ENCODE measurements at regions of chr21 and their contacts with region 1.

Region 1: GRCh38 chr21:36028127-36029069 is 31.9 kb downstream of the SETD4 start:
- DNase-seq: peak; percentile 83 to 88 (median 86)
- ATAC-seq: peak; percentile 95
- H3K4me3 ChIP-seq: no peak overlapping the region
- H3K27ac ChIP-seq: no peak overlapping the region
- H3K4me1 ChIP-seq: peaks cover 9 to 12% of the 10 kb centered on the region in 2 experiments; a peak in 3 of 5 replicates
- H3K27me3 ChIP-seq: peaks cover 14 to 21% of the 10 kb centered on the region in 2 experiments; a peak in 4 of 5 replicates
- CTCF ChIP-seq: peak; percentile 93 to 99 (median 98)
- EP300 ChIP-seq: no peak
- POLR2A ChIP-seq: no peak
- RAD21 ChIP-seq: peak; percentile 95 to 96

Region 2: GRCh38 chr21:34693192-34693810 is 1335.1 kb before region 1 on chr21:
- CTCF ChIA-PET with region 1: interaction called, 6 read pairs
- POLR2A ChIA-PET with region 1: interaction called, 3 read pairs
- in situ Hi-C with region 1: no loop called
- intact Hi-C with region 1: loop called (anchors 2 kb)
- DNase-seq: peak; percentile 74 to 77 (median 75)
- ATAC-seq: peak; percentile 87
- H3K4me3 ChIP-seq: no peak overlapping the region
- H3K27ac ChIP-seq: no peak overlapping the region
- H3K4me1 ChIP-seq: no peaks in the 10 kb centered on the region; a peak in 1 of 5 replicates
- H3K27me3 ChIP-seq: peaks cover 19 to 21% of the 10 kb centered on the region in 2 experiments
- CTCF ChIP-seq: peak; percentile 77 to 93 (median 88)
- EP300 ChIP-seq: no peak
- POLR2A ChIP-seq: no peak
- RAD21 ChIP-seq: peak; percentile 88 to 94

Region 3: GRCh38 chr21:35635261-35635660 is 393.1 kb before region 1 on chr21:
- CTCF ChIA-PET with region 1: no interaction called
- POLR2A ChIA-PET with region 1: no interaction called
- in situ Hi-C with region 1: no loop called
- intact Hi-C with region 1: no loop called
- DNase-seq: no peak
- ATAC-seq: no peak
- H3K4me3 ChIP-seq: no peak overlapping the region
- H3K27ac ChIP-seq: no peak overlapping the region
- H3K4me1 ChIP-seq: no peaks in the 10 kb centered on the region
- H3K27me3 ChIP-seq: peaks cover 17 to 21% of the 10 kb centered on the region in 2 experiments; a peak in 4 of 5 replicates
- CTCF ChIP-seq: no peak
- EP300 ChIP-seq: no peak
- POLR2A ChIP-seq: no peak
- RAD21 ChIP-seq: no peak

Region 4: GRCh38 chr21:35840197-35840799 is 188.1 kb before region 1 on chr21:
- CTCF ChIA-PET with region 1: no interaction called
- POLR2A ChIA-PET with region 1: no interaction called
- in situ Hi-C with region 1: no loop called
- intact Hi-C with region 1: loop called (anchors 10 kb)
- DNase-seq: peak; percentile 43 to 78 (median 54)
- ATAC-seq: peak; percentile 82
- H3K4me3 ChIP-seq: no peak overlapping the region
- H3K27ac ChIP-seq: no peak overlapping the region
- H3K4me1 ChIP-seq: no peaks in the 10 kb centered on the region
- H3K27me3 ChIP-seq: peaks cover 0 to 11% of the 10 kb centered on the region in 2 experiments; a peak in 3 of 5 replicates
- CTCF ChIP-seq: peak; percentile 70 to 87 (median 75); a peak in 5 of 6 replicates
- EP300 ChIP-seq: no peak
- POLR2A ChIP-seq: no peak
- RAD21 ChIP-seq: peak; percentile 82 to 96

Region 5: DNA sequence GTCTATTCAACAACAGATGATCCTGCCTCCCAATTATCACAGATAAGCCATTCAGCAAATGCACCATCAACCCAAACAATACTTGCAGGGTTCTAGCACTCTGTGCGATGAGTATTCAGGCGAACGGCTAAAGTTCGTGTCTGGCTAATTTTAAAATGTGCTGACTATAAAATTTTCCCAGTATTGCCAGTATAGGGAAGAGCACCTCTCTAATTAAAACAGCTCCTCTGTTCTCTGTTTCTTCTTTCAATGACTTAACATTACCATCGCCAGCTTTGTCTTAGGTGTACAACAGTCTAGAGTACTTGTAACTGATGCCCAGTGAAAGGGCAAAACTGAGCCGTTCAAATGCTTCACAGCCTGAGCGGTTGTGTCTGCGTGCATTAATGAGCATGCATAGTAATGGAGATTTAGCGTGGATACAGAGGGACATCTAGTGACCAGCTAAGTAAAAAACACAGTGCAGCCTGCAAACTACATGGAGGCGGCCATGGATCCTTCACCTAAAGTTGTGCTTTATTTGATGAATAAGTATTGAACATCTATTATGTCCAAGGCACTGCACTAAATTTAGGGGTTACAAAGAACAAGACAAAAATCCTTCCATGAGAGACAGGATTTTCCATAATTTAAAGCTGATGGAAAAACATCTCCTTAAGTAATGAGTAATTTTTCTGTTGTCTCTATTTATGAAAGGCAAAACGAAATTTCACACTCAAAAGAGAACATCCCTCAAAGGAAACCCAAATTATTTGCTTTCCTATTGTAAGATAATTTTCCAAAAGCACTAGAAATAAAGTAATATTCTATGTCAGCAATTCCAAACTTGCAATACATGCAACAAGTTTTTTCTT is 88.1 kb before region 1 on chr21:
- CTCF ChIA-PET with region 1: no interaction called
- POLR2A ChIA-PET with region 1: no interaction called
- in situ Hi-C with region 1: no loop called
- intact Hi-C with region 1: loop called (anchors 5 kb)
- DNase-seq: peak in 3 of 4 experiments; percentile 17 to 70 (median 52)
- ATAC-seq: peak; percentile 94
- H3K4me3 ChIP-seq: no peak overlapping the region
- H3K27ac ChIP-seq: no peak overlapping the region
- H3K4me1 ChIP-seq: peaks cover 0 to under 1% of the 10 kb centered on the region in 2 experiments; a peak in 2 of 5 replicates
- H3K27me3 ChIP-seq: peaks cover 16 to 20% of the 10 kb centered on the region in 2 experiments
- CTCF ChIP-seq: peak; percentile 61 to 85 (median 76)
- EP300 ChIP-seq: no peak
- POLR2A ChIP-seq: no peak
- RAD21 ChIP-seq: peak; percentile 90 to 94

Region 6: GRCh38 chr21:36104317-36105300 is 76.2 kb after region 1 on chr21:
- CTCF ChIA-PET with region 1: no interaction called
- POLR2A ChIA-PET with region 1: no interaction called
- in situ Hi-C with region 1: loop called (anchors 5 kb)
- intact Hi-C with region 1: no loop called
- DNase-seq: peak in 3 of 4 experiments; percentile 40 to 60 (median 47)
- ATAC-seq: peak; percentile 81
- H3K4me3 ChIP-seq: no peak overlapping the region
- H3K27ac ChIP-seq: no peak overlapping the region
- H3K4me1 ChIP-seq: no peaks in the 10 kb centered on the region
- H3K27me3 ChIP-seq: peaks cover 0 to 6% of the 10 kb centered on the region in 2 experiments; a peak in 1 of 5 replicates
- CTCF ChIP-seq: peak; percentile 55 to 71 (median 68)
- EP300 ChIP-seq: no peak
- POLR2A ChIP-seq: no peak
- RAD21 ChIP-seq: peak in 1 of 2 experiments; percentile 62; a peak in 2 of 4 replicates

Region 7: GRCh38 chr21:36113647-36114428 is 85.4 kb after region 1 on chr21:
- CTCF ChIA-PET with region 1: interaction called, 3 read pairs
- POLR2A ChIA-PET with region 1: no interaction called
- in situ Hi-C with region 1: loop called (anchors 5 kb)
- intact Hi-C with region 1: loop called (anchors 2 kb)
- DNase-seq: no peak
- ATAC-seq: no peak
- H3K4me3 ChIP-seq: no peak overlapping the region
- H3K27ac ChIP-seq: no peak overlapping the region
- H3K4me1 ChIP-seq: peaks cover 0 to 6% of the 10 kb centered on the region in 2 experiments; a peak in 1 of 5 replicates
- H3K27me3 ChIP-seq: peaks cover 0 to 3% of the 10 kb centered on the region in 2 experiments; a peak in 1 of 5 replicates
- CTCF ChIP-seq: no peak
- EP300 ChIP-seq: no peak
- POLR2A ChIP-seq: no peak
- RAD21 ChIP-seq: no peak